Naive thymus-derived CD4-positive, alpha-beta T cell (primary cell): ENCODE measurements at regions of chr14 and their contacts with region 1.

Region 1: DNA sequence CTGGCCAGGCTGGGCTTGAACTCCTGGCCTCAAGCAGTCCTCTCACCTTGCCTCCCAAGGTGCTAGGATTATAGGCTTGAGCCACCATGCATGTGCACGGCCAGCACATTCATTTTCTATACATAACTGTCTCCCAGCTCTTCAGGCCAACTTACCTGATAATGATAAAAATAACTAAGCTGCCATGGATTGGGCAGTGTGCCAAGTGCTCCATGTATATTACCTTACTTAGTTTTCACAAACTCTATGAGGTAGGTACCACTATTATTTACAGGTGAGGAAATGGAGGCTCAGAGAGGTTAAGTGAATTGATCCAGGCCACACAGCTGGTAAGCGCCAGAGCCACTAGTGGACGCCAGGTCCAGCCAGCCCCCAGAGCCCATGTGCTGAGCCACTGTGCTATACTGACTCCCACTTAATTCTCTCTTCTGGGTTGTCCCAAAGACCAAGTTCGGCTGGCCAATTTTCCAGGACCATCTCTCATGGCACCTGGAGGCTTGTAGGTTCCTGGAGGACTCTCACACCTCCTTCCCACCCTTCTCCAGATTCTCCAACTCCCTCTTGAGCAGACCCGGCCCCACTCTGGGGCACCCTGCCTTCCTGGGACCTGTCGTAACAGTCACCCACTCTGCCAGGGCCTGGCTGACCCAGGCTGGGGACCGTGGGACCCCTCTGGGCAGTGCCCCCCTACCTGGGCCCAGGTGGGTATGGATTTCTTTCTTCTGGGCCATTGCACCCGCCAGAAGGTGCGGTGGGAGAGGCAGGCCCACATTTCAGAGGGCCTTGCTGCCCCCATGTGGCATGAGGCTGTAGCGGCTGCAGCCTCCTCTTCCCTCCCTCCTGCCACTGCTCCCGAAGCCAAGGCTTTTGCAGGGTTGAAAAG is 30.2 kb upstream of the CIPC start:
- DNase-seq: peak; percentile 21 to 59 (median 48)
- ATAC-seq: peak; percentile 79
- H3K4me3 ChIP-seq: no peak overlapping the region
- H3K4me3 Mint-ChIP-seq: no peak overlapping the region
- H3K27ac ChIP-seq: no peak overlapping the region
- H3K27ac Mint-ChIP-seq: peak overlapping the region in 1 of 9 donors; percentile 36
- H3K4me1 ChIP-seq: no peaks in the 10 kb centered on the region
- H3K4me1 Mint-ChIP-seq: peaks cover 0 to 3% (median 0%) of the 10 kb centered on the region in 7 donors
- H3K27me3 ChIP-seq: no peaks in the 10 kb centered on the region
- H3K27me3 Mint-ChIP-seq: peaks cover 0 to 11% (median 4%) of the 10 kb centered on the region in 5 donors

Region 2: GRCh38 chr14:76710056-76711010 is 357.5 kb before region 1 on chr14:
- CTCF ChIA-PET with region 1: interaction called, 16 read pairs
- POLR2A ChIA-PET with region 1: no interaction called
- intact Hi-C with region 1: loop called (anchors 1 kb)
- DNase-seq: peak in 5 of 9 donors; percentile 11 to 44 (median 33)
- ATAC-seq: peak; percentile 67
- H3K4me3 ChIP-seq: no peak overlapping the region
- H3K4me3 Mint-ChIP-seq: no peak overlapping the region
- H3K27ac ChIP-seq: no peak overlapping the region
- H3K27ac Mint-ChIP-seq: no peak overlapping the region
- H3K4me1 ChIP-seq: no peaks in the 10 kb centered on the region
- H3K4me1 Mint-ChIP-seq: no peaks in the 10 kb centered on the region
- H3K27me3 ChIP-seq: no peaks in the 10 kb centered on the region
- H3K27me3 Mint-ChIP-seq: peaks cover 3 to 11% (median 9%) of the 10 kb centered on the region in 5 donors

Region 3: GRCh38 chr14:76904740-76905438 is 163.0 kb before region 1 on chr14:
- CTCF ChIA-PET with region 1: interaction called, 11 read pairs
- POLR2A ChIA-PET with region 1: no interaction called
- intact Hi-C with region 1: no loop called
- DNase-seq: peak in 8 of 9 donors; percentile 51 to 73 (median 62)
- ATAC-seq: peak; percentile 80
- H3K4me3 ChIP-seq: peak overlapping the region; percentile 1
- H3K4me3 Mint-ChIP-seq: peak overlapping the region in 9 of 10 donors; percentile 59 to 81 (median 71)
- H3K27ac ChIP-seq: no peak overlapping the region
- H3K27ac Mint-ChIP-seq: peak overlapping the region; percentile 43 to 97 (median 83)
- H3K4me1 ChIP-seq: peaks cover 18 to 24% of the 10 kb centered on the region in 2 donors
- H3K4me1 Mint-ChIP-seq: peaks cover 23 to 41% (median 27%) of the 10 kb centered on the region in 7 donors
- H3K27me3 ChIP-seq: no peaks in the 10 kb centered on the region
- H3K27me3 Mint-ChIP-seq: peaks cover 0 to 8% (median 0%) of the 10 kb centered on the region in 5 donors

Region 4: DNA sequence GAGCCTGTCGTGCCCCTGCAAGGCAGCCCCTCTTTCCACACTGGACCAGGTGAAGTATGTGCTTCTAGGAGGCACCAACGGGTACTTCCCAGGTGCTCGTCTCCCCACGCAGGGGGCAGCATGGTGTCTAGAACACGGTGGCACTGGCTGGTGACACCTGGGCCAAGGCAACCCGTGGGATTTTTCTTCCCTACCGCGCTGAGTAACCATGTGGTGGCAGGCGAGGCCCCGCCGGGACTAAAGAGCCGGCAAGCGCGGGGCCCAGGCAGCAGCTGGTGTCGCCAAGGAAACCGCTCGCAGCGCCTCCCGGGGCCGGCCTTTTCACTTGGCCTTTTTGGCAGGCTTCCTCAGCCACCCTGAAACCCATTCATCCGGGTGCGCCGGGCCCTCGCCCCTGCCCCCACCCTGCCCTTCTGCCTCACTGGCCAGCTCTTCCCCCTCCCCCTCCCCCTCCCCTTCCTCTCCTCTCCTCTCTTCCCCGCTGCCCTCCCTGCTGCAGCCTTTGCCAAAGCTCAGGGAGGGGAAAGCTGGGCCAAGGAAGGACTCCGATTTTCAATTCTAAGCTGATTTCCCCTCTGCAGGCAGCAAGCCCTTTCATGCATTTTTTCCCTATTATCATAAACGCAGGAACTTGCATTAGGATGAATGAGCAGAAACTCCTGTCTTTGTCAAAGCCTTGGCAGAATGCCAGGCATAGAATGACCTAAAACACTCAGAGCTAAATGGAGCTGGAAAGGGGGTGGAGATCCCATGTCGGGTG is 120.6 kb before region 1 on chr14:
- CTCF ChIA-PET with region 1: interaction called, 9 read pairs
- POLR2A ChIA-PET with region 1: no interaction called
- intact Hi-C with region 1: loop called in 1 of 2 experiments (anchors 1 kb)
- DNase-seq: peak; percentile 53 to 76 (median 68)
- ATAC-seq: peak; percentile 96
- H3K4me3 ChIP-seq: no peak overlapping the region
- H3K4me3 Mint-ChIP-seq: peak overlapping the region in 9 of 10 donors; percentile 20 to 65 (median 50)
- H3K27ac ChIP-seq: peak overlapping the region; percentile 20
- H3K27ac Mint-ChIP-seq: peak overlapping the region in 7 of 9 donors; percentile 28 to 83 (median 63)
- H3K4me1 ChIP-seq: peaks cover 6 to 16% of the 10 kb centered on the region in 2 donors
- H3K4me1 Mint-ChIP-seq: peaks cover 20 to 56% (median 35%) of the 10 kb centered on the region in 7 donors
- H3K27me3 ChIP-seq: no peaks in the 10 kb centered on the region
- H3K27me3 Mint-ChIP-seq: no peaks in the 10 kb centered on the region

Region 5: DNA sequence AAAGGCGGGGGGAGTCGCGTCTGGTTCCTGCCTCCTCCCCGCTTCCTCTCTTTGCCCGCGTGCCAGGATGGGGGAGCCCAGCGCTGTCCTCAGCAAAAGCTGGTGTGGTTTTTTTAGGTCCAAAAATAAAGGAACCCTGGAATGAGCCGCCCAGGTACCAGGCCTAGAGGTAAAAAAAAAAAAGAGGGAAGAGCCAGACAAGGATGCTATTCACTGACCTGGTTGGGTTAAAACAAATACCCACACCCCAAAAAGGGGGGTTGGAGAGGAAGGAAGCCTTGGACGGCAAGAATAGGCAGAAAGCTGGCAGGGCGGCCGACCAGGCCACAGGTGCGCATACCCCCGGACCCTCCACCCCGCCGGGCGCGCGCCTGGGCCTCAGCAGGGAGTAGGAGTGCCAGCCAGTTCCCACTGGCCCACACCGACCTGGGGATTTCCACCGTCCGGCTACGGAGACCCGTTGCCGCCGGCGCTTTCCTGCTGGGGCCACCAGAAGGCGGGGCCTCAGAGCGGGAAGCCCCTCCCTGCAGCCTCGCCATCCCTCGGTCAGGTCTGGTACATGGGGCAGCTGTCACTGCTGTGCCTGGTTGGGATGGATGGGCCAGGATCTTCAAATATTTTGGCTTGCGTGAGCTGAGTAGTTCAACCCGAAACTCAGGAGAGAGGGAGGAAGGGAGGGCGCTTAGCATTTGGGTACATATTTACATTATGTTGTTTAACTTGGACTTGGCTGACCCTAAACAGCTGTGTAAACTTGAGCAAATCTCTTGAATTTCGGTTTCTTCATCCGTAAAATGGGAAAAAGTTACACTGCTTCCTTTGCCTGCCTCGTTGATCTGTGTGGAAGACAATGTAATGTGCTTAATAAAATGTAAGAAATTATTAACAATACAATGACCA is 34.0 kb before region 1 on chr14:
- CTCF ChIA-PET with region 1: no interaction called
- POLR2A ChIA-PET with region 1: no interaction called
- intact Hi-C with region 1: no loop called
- DNase-seq: peak in 7 of 9 donors; percentile 32 to 89 (median 47)
- ATAC-seq: peak; percentile 76
- H3K4me3 ChIP-seq: peak overlapping the region; percentile 79
- H3K4me3 Mint-ChIP-seq: peak overlapping the region; percentile 81 to 93 (median 90)
- H3K27ac ChIP-seq: peak overlapping the region; percentile 95
- H3K27ac Mint-ChIP-seq: peak overlapping the region; percentile 92 to 98 (median 94)
- H3K4me1 ChIP-seq: peaks cover 37 to 67% of the 10 kb centered on the region in 2 donors
- H3K4me1 Mint-ChIP-seq: peaks cover 45 to 85% (median 78%) of the 10 kb centered on the region in 7 donors
- H3K27me3 ChIP-seq: no peaks in the 10 kb centered on the region
- H3K27me3 Mint-ChIP-seq: no peaks in the 10 kb centered on the region

Region 6: DNA sequence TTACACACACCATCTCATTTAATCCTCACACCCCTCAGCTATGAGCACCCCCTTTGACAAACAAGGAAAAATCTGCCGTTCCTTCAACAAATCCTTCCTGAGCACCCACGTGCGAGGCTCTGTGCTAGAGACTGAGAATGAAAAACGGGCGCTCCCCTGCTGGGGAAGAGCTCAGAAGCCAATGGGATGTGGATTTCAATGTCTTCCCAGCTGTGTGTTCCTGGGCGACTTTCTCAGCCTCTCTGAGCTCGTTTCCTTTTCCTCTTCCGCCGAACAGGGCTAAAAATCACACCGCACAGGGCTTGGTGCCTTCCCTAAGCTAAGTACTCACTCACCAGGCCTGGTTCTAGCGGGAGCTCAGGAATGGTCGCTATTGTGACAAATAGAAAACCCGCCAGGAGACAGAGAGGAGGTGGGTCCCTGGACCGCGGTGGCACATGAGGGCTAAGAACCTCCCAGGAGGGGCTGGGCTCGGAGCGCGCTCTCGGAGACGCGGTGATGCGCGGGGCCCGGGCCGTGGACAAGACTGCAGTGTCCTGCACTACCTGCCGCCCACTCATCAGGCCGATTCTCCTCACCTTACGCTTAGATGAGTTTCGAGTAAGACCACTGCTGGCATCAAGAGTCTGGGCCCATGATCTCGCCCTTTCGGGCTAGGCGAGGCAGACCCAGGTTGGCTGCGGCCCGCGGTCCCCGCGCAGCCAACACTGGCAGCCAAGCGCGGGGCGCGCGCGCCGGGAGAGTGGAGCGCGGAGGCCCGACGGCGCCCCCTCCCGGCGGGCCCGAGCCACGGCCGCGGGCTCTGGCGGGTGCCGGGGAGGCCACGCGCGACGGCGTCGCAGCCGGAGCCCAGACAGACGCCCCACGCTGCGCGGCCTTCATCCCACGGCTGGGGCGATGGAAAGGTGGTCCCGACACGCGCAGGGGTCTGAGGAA is 56.7 kb after region 1 on chr14:
- CTCF ChIA-PET with region 1: interaction called, 15 read pairs
- POLR2A ChIA-PET with region 1: interaction called, 3 read pairs
- intact Hi-C with region 1: loop called in 1 of 2 experiments (anchors 1 kb)
- DNase-seq: peak; percentile 49 to 77 (median 66)
- ATAC-seq: peak; percentile 91
- H3K4me3 ChIP-seq: peak overlapping the region; percentile 84
- H3K4me3 Mint-ChIP-seq: peak overlapping the region; percentile 70 to 83 (median 78)
- H3K27ac ChIP-seq: peak overlapping the region; percentile 56
- H3K27ac Mint-ChIP-seq: peak overlapping the region in 3 of 9 donors; percentile 67 to 86 (median 72)
- H3K4me1 ChIP-seq: peaks cover 16 to 48% of the 10 kb centered on the region in 2 donors
- H3K4me1 Mint-ChIP-seq: peaks cover 6 to 41% (median 28%) of the 10 kb centered on the region in 7 donors
- H3K27me3 ChIP-seq: no peaks in the 10 kb centered on the region
- H3K27me3 Mint-ChIP-seq: peaks cover 26 to 56% (median 33%) of the 10 kb centered on the region in 5 donors